ENCODE measurements at regions of chr6 and their contacts with region 1.

Region 1: DNA sequence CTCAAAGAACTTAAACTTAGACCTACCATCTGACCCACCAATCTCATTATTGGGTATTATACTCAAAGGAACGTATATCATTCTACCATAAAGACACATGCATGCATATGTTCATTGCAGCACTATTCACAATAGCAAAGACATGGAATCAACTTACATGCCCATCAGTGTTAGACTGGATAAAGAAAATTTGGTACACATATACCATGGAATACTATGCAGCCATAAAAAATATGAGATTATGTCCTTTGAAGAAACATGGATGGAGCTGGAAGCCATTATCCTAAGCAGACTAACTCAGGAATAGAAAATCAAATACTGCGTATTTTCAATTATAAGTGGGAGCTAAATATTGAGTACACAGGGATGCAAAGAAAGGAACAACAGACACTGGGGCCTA is 166.4 kb upstream of the GLP1R start:
- DNase-seq: no peak
- H3K4me3 ChIP-seq: no peak overlapping the region
- H3K27ac ChIP-seq: no peak overlapping the region
- H3K4me1 ChIP-seq: no peaks in the 10 kb centered on the region
- H3K27me3 ChIP-seq: no peaks in the 10 kb centered on the region
- CTCF ChIP-seq: no peak
- POLR2A ChIP-seq: no peak

Region 2: DNA sequence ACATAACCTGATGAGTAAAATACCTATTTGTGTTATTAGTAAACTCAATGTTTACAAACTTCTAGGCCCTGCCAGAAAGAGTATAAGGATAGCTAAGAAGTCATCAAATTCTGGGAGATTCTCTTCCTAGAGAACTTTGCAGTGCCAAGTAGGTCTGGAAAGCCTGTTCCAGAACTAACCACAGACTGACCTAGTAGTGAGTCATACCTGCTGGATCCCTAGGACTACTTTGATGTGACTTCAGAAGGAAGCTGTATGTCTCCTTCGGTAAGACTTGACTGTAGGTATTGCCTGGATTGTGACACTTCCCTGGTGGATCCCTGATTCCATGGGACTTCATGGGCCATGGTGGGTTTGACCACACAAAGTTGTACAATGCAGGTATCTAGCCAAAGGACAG is 35.3 kb before region 1 on chr6:
- intact Hi-C with region 1: no loop called
- DNase-seq: no peak
- H3K4me3 ChIP-seq: no peak overlapping the region
- H3K27ac ChIP-seq: no peak overlapping the region
- H3K4me1 ChIP-seq: no peaks in the 10 kb centered on the region
- H3K27me3 ChIP-seq: no peaks in the 10 kb centered on the region
- CTCF ChIP-seq: no peak
- POLR2A ChIP-seq: no peak

Region 3: DNA sequence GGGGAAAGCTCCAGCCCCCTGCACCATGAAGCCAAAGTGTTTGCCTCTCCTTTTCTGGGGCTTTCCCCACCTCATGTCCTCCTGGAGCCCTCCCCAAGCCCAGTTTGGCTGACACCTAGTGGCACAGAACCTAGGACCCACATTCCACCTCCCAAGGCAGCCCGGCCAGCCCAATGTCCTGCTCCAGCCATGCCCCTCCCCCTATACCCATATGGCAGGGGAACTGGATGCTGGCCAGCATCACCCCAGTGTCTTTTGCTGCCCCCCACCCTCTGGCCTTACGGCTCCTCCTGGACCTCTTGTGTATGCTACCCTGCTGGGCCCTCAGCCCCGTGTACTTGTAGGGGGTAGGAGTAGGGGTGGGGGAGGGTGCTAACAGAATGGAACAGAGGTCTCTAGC is 673.0 kb after region 1 on chr6:
- intact Hi-C with region 1: loop called (anchors 5 kb)
- DNase-seq: no peak
- H3K4me3 ChIP-seq: no peak overlapping the region
- H3K27ac ChIP-seq: no peak overlapping the region
- H3K4me1 ChIP-seq: peaks cover 7% of the 10 kb centered on the region
- H3K27me3 ChIP-seq: no peaks in the 10 kb centered on the region
- CTCF ChIP-seq: no peak
- POLR2A ChIP-seq: no peak

Measured in vagina (tissue), 2 donors.